Pancreas (tissue), 10 donors: ENCODE measurements at regions of chr3 and their contacts with region 1.

Region 1: DNA sequence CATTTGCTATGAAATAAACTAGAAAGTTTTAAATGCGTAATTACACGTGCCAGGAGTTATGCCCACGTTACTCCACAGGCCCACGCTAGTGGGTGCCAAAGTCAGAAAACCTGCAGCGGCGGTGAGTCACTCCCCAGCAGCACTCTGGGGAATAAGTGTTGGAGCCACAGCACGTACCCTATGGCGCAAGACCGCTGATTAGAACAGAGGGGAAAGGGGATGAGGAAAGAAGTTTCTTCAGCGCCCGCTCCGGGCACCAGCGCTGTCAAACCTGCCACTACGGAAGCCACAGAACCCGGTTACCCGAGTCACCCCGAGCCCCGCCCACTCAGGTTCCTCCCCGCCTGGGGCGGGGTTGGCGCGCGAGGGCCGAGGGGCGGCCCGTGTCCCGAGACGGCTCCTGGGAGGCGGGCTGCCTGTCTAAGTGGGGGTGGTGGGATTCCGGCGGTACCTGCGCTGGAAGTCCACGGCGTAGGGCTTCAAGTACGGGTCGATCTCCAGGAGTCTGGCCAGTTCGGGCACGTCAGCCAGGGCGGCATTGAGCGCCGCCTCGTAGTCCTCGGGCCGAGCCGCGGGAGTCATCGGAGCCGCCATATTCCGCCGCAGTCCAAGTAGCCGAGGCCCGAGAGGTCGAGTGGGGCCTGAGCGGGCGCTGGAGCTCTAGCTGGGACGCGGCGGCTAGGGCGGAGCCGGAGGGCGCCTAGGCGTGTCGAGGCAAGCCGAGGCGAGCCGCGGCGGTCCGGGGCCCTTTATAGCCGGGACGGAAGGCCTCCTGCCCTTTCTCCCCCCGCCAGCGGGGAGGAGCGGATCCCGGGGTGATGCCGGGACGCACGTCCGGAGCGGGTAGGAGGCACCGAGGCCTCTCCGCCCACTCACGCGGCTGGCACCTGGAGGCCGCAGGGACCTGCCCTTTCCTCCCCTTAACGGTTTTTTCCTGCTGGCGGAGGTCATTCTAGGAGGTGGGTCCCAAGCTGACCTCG is at the start of gene GBE1:
- DNase-seq: peak; percentile 90 to 95 (median 93)
- ATAC-seq: peak; percentile 89 to 95 (median 92)
- H3K4me3 ChIP-seq: peak within 1 kb of the TSS; percentile 49 to 71 (median 64)
- H3K27ac ChIP-seq: peak within 1 kb of the TSS; percentile 98 to 100 (median 99)
- H3K4me1 ChIP-seq: peaks cover 8 to 19% (median 11%) of the 10 kb centered on the region in 3 donors
- H3K27me3 ChIP-seq: no peaks in the 10 kb centered on the region
- CTCF ChIP-seq: peak in 1 of 4 donors; percentile 11
- total RNA-seq, gene GBE1: 8.5 to 14.1 (median 10.8) TPM

Region 2: GRCh38 chr3:81500039-81500438 is 261.2 kb before region 1 on chr3:
- intact Hi-C with region 1: no loop called
- DNase-seq: no peak
- ATAC-seq: no peak
- H3K4me3 ChIP-seq: no peak overlapping the region
- H3K27ac ChIP-seq: no peak overlapping the region
- H3K4me1 ChIP-seq: no peaks in the 10 kb centered on the region
- H3K27me3 ChIP-seq: no peaks in the 10 kb centered on the region
- CTCF ChIP-seq: no peak

Region 3: DNA sequence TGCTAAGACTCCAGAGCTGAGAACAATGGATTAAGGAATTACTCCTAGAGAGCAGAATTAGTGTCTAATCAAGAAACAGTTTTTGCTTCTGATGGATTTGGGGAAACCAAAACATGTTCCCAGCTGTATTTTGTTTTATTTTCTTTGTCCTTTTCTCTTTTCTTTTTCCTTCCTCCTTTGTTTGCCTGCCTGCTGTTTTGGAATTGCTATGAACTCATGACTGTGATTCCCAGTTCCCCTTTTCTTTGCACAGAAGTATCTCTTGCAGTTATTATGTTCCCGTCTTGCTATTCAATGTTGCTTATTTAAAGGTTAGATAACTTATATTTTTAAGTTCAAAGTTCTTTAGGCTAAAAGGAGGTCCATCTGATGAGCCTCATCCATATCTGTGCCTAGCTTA is 77.2 kb after region 1 on chr3:
- intact Hi-C with region 1: loop called in 1 of 3 experiments (anchors 10 kb)
- DNase-seq: no peak
- ATAC-seq: peak in 1 of 4 donors; percentile 42
- H3K4me3 ChIP-seq: no peak overlapping the region
- H3K27ac ChIP-seq: no peak overlapping the region
- H3K4me1 ChIP-seq: no peaks in the 10 kb centered on the region
- H3K27me3 ChIP-seq: no peaks in the 10 kb centered on the region
- CTCF ChIP-seq: no peak